ENCODE measurements at regions of chr16 and their contacts with region 1.

Region 1: GRCh38 chr16:21708533-21709115 is 44.9 kb downstream of the OTOA start:
- DNase-seq: no peak
- ATAC-seq: peak; percentile 31

Region 2: GRCh38 chr16:21584817-21585216 is 123.8 kb before region 1 on chr16:
- intact Hi-C with region 1: loop called (anchors 1 kb)
- DNase-seq: no peak
- ATAC-seq: no peak

Region 3: DNA sequence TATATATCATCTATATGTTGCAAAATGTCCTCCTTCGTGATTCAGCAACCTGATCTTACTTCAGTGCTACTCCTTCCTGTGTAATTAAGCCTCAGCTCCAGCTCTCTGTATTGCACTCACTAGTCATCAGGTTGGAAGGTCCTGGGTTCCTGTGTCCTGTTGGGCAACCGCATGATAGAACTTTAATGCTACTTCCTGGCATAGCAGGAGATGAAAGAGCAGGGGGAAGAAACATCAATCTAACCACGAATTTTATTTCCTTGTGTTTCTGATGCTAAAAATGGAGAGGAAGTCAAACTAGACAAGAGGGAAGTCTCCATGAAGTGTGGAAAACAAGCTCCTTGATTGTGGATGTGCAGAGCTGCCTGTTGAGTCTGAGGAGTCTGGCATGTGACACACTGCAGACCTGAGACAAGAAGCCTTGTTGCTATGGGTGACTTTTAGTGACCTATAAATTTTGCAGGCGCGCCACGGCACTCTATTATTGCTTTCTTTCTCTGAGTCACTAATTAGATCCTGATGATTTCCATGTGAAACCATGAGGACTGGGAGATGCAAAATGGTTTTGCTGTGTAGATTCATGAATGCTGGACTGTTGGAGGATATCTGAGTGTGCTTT is 81.9 kb before region 1 on chr16:
- intact Hi-C with region 1: no loop called
- DNase-seq: no peak
- ATAC-seq: peak; percentile 34

Region 4: GRCh38 chr16:21656795-21657768 is 51.5 kb before region 1 on chr16:
- intact Hi-C with region 1: loop called (anchors 5 kb)
- DNase-seq: no peak
- ATAC-seq: no peak